CD4-positive, alpha-beta memory T cell (primary cell): ENCODE measurements at regions of chr13 and their contacts with region 1.

Region 1: GRCh38 chr13:94674609-94675348 is 37.6 kb downstream of the SOX21 start:
- DNase-seq: peak in 4 of 5 donors; percentile 20 to 32 (median 22)
- H3K4me3 ChIP-seq: no peak overlapping the region
- H3K4me3 Mint-ChIP-seq: no peak overlapping the region
- H3K27ac ChIP-seq: no peak overlapping the region
- H3K27ac Mint-ChIP-seq: no peak overlapping the region
- H3K4me1 ChIP-seq: no peaks in the 10 kb centered on the region
- H3K4me1 Mint-ChIP-seq: no peaks in the 10 kb centered on the region
- H3K27me3 ChIP-seq: peaks cover 4% of the 10 kb centered on the region
- H3K27me3 Mint-ChIP-seq: peaks cover 18 to 20% of the 10 kb centered on the region in 2 donors

Region 2: GRCh38 chr13:94620286-94620896 is 54.4 kb before region 1 on chr13:
- CTCF ChIA-PET with region 1: no interaction called
- POLR2A ChIA-PET with region 1: no interaction called
- intact Hi-C with region 1: no loop called
- DNase-seq: peak in 3 of 5 donors; percentile 6 to 17 (median 7)
- H3K4me3 ChIP-seq: no peak overlapping the region
- H3K4me3 Mint-ChIP-seq: no peak overlapping the region
- H3K27ac ChIP-seq: no peak overlapping the region
- H3K27ac Mint-ChIP-seq: no peak overlapping the region
- H3K4me1 ChIP-seq: peaks cover 9% of the 10 kb centered on the region
- H3K4me1 Mint-ChIP-seq: peaks cover 8 to 14% (median 11%) of the 10 kb centered on the region in 4 donors
- H3K27me3 ChIP-seq: no peaks in the 10 kb centered on the region
- H3K27me3 Mint-ChIP-seq: no peaks in the 10 kb centered on the region

Region 3: GRCh38 chr13:94776956-94777355 is 102.2 kb after region 1 on chr13:
- CTCF ChIA-PET with region 1: no interaction called
- POLR2A ChIA-PET with region 1: no interaction called
- intact Hi-C with region 1: no loop called
- DNase-seq: no peak
- H3K4me3 ChIP-seq: no peak overlapping the region
- H3K4me3 Mint-ChIP-seq: no peak overlapping the region
- H3K27ac ChIP-seq: no peak overlapping the region
- H3K27ac Mint-ChIP-seq: no peak overlapping the region
- H3K4me1 ChIP-seq: no peaks in the 10 kb centered on the region
- H3K4me1 Mint-ChIP-seq: no peaks in the 10 kb centered on the region
- H3K27me3 ChIP-seq: no peaks in the 10 kb centered on the region
- H3K27me3 Mint-ChIP-seq: peaks cover 0 to 1% of the 10 kb centered on the region in 2 donors

Region 4: DNA sequence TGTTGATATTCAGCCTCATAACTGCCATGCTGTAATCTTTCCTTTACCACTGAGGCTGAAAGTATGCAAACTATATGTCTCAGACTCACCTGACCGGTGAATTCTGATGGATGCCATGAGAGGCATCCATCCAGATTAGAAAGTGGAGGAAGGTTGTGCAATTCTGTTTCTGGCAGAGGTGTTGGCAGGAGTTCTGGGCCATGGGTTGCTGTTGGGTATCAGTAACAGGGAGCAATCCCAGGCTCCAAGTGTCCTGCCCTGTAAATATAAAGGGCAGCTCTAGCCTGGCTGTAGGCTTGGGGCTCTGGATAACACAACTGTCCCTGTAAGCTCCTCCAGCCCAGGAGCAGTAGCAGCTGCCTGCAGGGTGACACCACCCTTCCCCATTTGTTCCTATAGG is 703.8 kb after region 1 on chr13:
- CTCF ChIA-PET with region 1: interaction called, 3 read pairs
- POLR2A ChIA-PET with region 1: no interaction called
- intact Hi-C with region 1: loop called (anchors 2 kb)
- DNase-seq: no peak
- H3K4me3 ChIP-seq: no peak overlapping the region
- H3K4me3 Mint-ChIP-seq: no peak overlapping the region
- H3K27ac ChIP-seq: no peak overlapping the region
- H3K27ac Mint-ChIP-seq: no peak overlapping the region
- H3K4me1 ChIP-seq: no peaks in the 10 kb centered on the region
- H3K4me1 Mint-ChIP-seq: peaks cover 3 to 6% (median 4%) of the 10 kb centered on the region in 4 donors
- H3K27me3 ChIP-seq: no peaks in the 10 kb centered on the region
- H3K27me3 Mint-ChIP-seq: peaks cover 2 to 7% of the 10 kb centered on the region in 2 donors

Region 5: DNA sequence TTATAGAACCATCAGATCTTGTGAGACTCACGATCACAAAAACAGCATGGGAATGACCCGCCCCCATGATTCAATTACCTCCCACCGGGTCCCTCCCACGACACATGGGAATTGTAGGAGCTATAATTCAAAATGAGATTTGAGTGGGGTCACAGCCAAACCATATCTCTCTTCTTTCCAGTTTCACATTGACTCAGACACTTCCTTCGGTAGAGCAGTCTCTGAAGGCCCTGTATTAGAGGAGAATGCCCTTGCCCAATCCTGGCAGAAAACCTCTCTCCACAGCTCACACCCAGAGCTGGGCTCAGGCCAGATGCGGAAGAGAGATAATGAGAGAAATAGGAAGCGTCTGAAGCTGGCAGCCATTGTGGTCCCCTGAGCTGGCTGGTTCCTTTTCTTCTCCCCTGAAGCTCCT is 805.4 kb after region 1 on chr13:
- CTCF ChIA-PET with region 1: interaction called, 4 read pairs
- POLR2A ChIA-PET with region 1: no interaction called
- intact Hi-C with region 1: loop called (anchors 1 kb)
- DNase-seq: no peak
- H3K4me3 ChIP-seq: no peak overlapping the region
- H3K4me3 Mint-ChIP-seq: peak overlapping the region in 1 of 8 donors; percentile 35
- H3K27ac ChIP-seq: no peak overlapping the region
- H3K27ac Mint-ChIP-seq: no peak overlapping the region
- H3K4me1 ChIP-seq: no peaks in the 10 kb centered on the region
- H3K4me1 Mint-ChIP-seq: peaks cover 4 to 8% (median 8%) of the 10 kb centered on the region in 4 donors
- H3K27me3 ChIP-seq: no peaks in the 10 kb centered on the region
- H3K27me3 Mint-ChIP-seq: peaks cover 0 to 1% of the 10 kb centered on the region in 2 donors